Right ventricle myocardium inferior (tissue), 1 donor: ENCODE measurements at regions of chr10 and their contacts with region 1.

Region 1: DNA sequence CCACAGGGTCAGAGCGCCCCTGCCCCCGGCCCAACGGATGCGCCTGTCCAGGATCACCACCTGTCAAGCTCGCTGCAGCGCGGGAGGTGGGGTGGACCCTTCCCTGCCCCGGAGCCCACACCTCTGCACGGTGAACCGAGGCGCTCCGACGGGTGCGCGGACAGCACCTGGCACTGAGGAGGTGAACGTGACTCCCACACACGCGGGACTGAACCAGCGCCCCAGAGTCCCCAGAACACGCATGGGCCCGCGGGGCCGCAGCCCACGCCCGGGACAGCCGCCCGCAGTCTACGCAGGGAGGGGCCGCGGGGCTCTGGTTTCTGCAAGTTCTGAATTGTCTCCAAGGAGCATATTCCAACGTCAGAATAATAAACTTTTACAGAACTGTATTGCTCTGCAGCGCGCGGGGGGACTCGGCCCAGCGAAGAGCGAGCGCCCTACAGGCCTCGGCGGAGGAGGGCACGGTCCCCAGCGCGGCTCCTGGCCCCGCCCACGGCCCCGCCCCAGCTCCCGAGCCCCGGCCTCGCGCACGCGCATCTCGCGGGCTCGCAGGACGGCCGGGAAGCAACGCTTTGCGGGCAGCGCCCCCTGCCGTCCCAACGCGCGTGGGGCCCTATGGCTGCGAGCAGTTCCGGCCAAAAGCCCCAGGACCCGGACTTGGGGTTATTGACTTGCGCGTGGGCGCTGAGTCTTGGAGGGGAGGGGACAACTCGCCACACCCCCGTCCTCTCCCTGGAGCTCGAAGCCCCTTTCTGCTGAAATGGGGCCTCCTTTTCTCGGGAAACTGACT is 29.7 kb downstream of the OAT start:
- DNase-seq: peak; percentile 96
- ATAC-seq: peak; percentile 99

Region 2: GRCh38 chr10:123582084-123582989 is 806.7 kb before region 1 on chr10:
- intact Hi-C with region 1: loop called (anchors 5 kb)
- DNase-seq: peak; percentile 79
- ATAC-seq: peak; percentile 56

Region 3: DNA sequence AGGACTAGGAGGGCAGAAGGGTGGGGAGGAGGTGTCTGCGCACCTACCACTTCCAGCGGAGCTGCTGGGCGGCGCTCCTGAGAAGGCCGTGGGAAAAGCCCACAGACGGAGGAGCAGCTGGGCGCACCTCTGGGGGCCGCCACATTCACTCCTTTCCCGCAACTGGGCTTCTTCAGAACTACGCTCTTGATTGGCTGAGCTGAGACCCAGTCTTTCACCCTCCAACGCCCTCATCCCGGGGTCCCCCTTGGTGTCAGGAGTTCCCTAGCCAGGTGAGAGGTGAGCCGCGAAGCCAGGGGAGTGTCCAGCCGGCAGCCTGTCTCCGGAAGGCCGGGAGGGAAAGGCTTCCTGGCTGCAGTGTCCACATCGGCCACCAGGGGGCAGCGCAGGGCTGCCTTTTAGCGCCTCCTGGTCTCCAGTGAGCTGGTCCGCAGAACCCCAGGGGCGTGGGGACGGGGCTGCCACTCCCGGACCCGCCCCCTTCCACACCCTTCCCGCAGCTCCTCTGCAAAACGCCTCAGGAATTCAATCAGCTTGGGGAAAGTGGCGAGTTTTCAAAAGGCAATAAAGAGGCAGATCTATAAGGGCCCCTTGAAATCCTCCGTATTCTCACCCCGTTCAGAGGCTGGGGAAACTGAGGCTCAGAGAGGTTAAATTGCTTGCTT is 394.5 kb before region 1 on chr10:
- intact Hi-C with region 1: loop called (anchors 1 kb)
- DNase-seq: peak; percentile 93
- ATAC-seq: peak; percentile 82

Region 4: DNA sequence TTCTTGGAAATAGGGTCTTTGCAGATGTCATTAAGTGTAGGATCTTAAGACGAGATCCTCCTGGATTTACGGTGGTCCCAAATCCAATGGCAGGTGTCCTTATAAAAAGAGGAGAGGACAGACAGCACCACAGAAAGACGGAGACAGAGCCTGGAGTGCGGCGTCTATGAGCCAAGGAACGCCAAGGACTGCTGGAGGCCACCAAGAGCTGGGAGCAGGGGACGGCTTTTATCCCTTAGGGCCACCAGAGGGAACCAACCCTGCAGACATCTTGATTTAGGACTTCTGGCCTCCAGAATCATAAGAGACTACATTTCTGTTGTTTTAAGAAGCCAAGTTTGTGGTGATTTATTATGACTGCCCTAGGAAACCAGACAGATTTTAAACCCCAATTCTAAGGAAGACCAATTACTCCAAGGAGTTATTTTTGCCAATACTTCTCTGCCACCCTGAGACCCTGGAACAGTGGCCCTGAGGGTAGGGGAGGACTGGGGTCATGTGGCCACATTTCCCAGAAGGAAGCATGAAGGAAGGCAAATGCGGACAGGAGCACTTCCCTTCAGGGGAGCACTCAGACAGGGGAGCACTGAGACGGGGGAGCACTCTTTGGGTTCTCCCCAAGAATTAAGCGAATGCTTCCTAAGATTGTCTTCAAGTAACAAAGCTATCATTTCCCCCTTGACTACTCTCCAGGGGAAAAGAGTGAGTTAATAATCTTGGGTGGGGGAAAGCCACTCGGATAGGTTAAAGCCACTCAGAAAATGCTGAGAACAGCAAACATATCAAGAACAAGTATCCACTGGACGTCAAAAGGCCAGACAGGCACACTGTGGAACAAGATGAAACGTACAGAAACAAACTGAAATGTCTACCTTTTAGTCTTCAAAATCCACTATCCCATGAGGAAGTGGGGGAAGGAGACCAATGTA is 363.1 kb before region 1 on chr10:
- intact Hi-C with region 1: loop called (anchors 1 kb)
- DNase-seq: no peak
- ATAC-seq: no peak

Region 5: GRCh38 chr10:124267231-124267885 is 121.7 kb before region 1 on chr10:
- intact Hi-C with region 1: loop called (anchors 10 kb)
- DNase-seq: peak; percentile 67
- ATAC-seq: peak; percentile 82